ENCODE measurements at regions of chr10 and their contacts with region 1.

Region 1: GRCh38 chr10:125000366-125001312 is 58.7 kb downstream of the ZRANB1 start:
- DNase-seq: no peak
- ATAC-seq: peak; percentile 47
- H3K4me3 ChIP-seq: peak overlapping the region in 1 of 3 experiments; percentile 3; a peak in 1 of 6 replicates
- H3K27ac ChIP-seq: no peak overlapping the region
- H3K4me1 ChIP-seq: peaks cover 18% of the 10 kb centered on the region
- H3K27me3 ChIP-seq: peaks cover 16 to 78% of the 10 kb centered on the region in 2 experiments; a peak in 4 of 5 replicates
- CTCF ChIP-seq: peak; percentile 35
- EP300 ChIP-seq: no peak
- POLR2A ChIP-seq: no peak
- RAD21 ChIP-seq: no peak

Region 2: GRCh38 chr10:125015312-125015944 is 14.8 kb after region 1 on chr10:
- CTCF ChIA-PET with region 1: no interaction called
- POLR2A ChIA-PET with region 1: no interaction called
- in situ Hi-C with region 1: no loop called
- intact Hi-C with region 1: no loop called
- DNase-seq: no peak
- ATAC-seq: no peak
- H3K4me3 ChIP-seq: no peak overlapping the region
- H3K27ac ChIP-seq: no peak overlapping the region
- H3K4me1 ChIP-seq: no peaks in the 10 kb centered on the region
- H3K27me3 ChIP-seq: peaks cover 12 to 74% of the 10 kb centered on the region in 2 experiments
- CTCF ChIP-seq: no peak
- EP300 ChIP-seq: no peak
- POLR2A ChIP-seq: no peak
- RAD21 ChIP-seq: no peak

Region 3: DNA sequence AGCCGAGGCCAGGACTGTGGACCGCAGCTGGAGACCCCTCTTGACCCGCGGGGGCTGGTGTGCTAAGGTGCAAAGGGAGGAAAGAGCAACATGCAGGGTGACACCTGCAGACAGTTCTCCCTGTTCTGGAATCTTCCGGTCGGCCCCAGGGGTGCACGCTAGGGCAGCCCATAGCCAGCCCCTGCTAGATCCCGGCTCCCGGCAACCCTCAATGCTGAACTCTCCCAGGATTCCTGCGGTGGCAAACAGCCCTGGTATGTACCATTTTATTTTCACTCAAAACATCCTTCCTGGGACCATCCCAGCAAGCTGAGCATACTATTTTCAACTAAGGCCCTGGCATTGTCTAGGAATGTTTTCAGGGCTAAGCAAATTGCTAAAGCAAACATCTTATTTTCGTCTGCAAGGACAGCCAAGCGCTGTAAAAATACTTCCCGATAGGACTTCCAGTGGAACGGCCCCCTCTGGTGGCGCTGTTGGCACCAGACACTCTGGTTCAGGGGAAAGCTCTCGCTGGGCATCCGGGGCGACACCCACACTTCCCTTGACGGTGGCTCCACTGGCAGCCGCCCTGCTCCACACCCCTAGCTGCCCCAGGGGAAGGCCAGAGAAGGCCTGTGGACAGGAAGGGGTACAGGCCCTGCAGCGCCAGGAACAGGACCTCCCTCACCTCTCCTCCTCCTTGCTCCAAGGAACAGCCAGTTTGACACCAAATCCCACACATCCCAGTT is 60.4 kb after region 1 on chr10:
- CTCF ChIA-PET with region 1: interaction called, 3 read pairs
- POLR2A ChIA-PET with region 1: no interaction called
- in situ Hi-C with region 1: no loop called
- intact Hi-C with region 1: loop called (anchors 5 kb)
- DNase-seq: peak; percentile 35
- ATAC-seq: peak; percentile 92
- H3K4me3 ChIP-seq: peak overlapping the region in 2 of 3 experiments; percentile 18 to 33; a peak in 2 of 6 replicates
- H3K27ac ChIP-seq: no peak overlapping the region
- H3K4me1 ChIP-seq: peaks cover 7% of the 10 kb centered on the region; the same call in 1 of the 2 replicates
- H3K27me3 ChIP-seq: peaks cover 6 to 46% of the 10 kb centered on the region in 2 experiments; a peak in 3 of 5 replicates
- CTCF ChIP-seq: peak; percentile 87
- EP300 ChIP-seq: no peak
- POLR2A ChIP-seq: no peak
- RAD21 ChIP-seq: peak; percentile 57; the same call in 1 of the 2 replicates